ENCODE measurements at regions of chr14 and their contacts with region 1.

Region 1: GRCh38 chr14:50726372-50727107 is 58.4 kb upstream of the SAV1 start:
- DNase-seq: no peak
- H3K4me3 Mint-ChIP-seq: peak overlapping the region; percentile 61
- H3K27ac Mint-ChIP-seq: peak overlapping the region; percentile 85
- H3K4me1 Mint-ChIP-seq: peaks cover 22% of the 10 kb centered on the region
- H3K27me3 Mint-ChIP-seq: no peaks in the 10 kb centered on the region

Region 2: GRCh38 chr14:50489489-50490250 is 236.9 kb before region 1 on chr14:
- CTCF ChIA-PET with region 1: no interaction called
- POLR2A ChIA-PET with region 1: no interaction called
- DNase-seq: no peak
- H3K4me3 Mint-ChIP-seq: no peak overlapping the region
- H3K27ac Mint-ChIP-seq: no peak overlapping the region
- H3K4me1 Mint-ChIP-seq: peaks cover 2% of the 10 kb centered on the region
- H3K27me3 Mint-ChIP-seq: no peaks in the 10 kb centered on the region

Region 3: GRCh38 chr14:50704454-50705010 is 22.0 kb before region 1 on chr14:
- CTCF ChIA-PET with region 1: no interaction called
- POLR2A ChIA-PET with region 1: no interaction called
- DNase-seq: no peak
- H3K4me3 Mint-ChIP-seq: no peak overlapping the region
- H3K27ac Mint-ChIP-seq: no peak overlapping the region
- H3K4me1 Mint-ChIP-seq: no peaks in the 10 kb centered on the region
- H3K27me3 Mint-ChIP-seq: peaks cover 14% of the 10 kb centered on the region

Region 4: DNA sequence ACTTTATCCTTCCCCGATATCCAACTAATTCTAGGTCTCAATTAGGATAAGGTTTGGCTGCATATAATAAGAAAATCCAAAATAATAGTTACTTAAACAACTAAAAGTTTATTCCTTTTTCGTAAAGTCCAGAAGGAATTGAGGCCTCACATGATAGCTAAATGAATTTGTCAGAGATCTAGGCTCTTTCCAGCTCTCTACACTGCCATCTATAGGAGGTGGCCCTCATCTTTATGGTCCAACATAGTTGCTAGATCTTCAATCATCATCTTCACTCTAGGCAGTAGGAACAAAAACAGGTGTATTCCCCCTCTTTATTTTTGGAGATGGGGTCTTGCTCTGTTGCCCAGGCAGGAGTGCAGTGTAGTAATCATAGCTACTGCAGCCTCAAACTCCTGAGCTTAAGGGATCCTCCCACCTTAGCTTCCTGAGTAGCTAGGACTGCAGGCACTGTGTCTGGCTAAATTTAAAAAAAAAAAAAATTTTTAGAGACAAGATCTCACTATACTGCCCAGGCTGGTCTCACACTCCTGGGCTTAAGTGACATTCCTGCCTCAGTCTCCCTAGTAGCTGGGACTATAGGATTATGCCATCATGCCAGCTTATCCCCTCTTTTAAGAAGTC is 12.0 kb before region 1 on chr14:
- CTCF ChIA-PET with region 1: interaction called, 19 read pairs
- POLR2A ChIA-PET with region 1: no interaction called
- DNase-seq: no peak
- H3K4me3 Mint-ChIP-seq: no peak overlapping the region
- H3K27ac Mint-ChIP-seq: no peak overlapping the region
- H3K4me1 Mint-ChIP-seq: no peaks in the 10 kb centered on the region
- H3K27me3 Mint-ChIP-seq: no peaks in the 10 kb centered on the region